Esophagus muscularis mucosa (tissue), 4 donors: ENCODE measurements at regions of chr2 and their contacts with region 1.

Region 1: GRCh38 chr2:10122386-10123280 is at the start of gene RRM2:
- DNase-seq: peak; percentile 97
- H3K4me3 ChIP-seq: peak within 1 kb of the TSS; percentile 57 to 64 (median 58)
- H3K27ac ChIP-seq: no peak within 1 kb of the TSS
- H3K4me1 ChIP-seq: peaks cover 20 to 43% (median 37%) of the 10 kb centered on the region in 4 donors
- H3K27me3 ChIP-seq: peaks cover 0 to 30% (median 14%) of the 10 kb centered on the region in 4 donors
- CTCF ChIP-seq: no peak
- EP300 ChIP-seq: no peak
- POLR2A ChIP-seq: no peak
- total RNA-seq, gene RRM2: 1.7 to 4.6 TPM in 2 of 4 donors, not detected in the others

Region 2: GRCh38 chr2:9993488-9994165 is 129.0 kb before region 1 on chr2:
- intact Hi-C with region 1: no loop called
- DNase-seq: no peak
- H3K4me3 ChIP-seq: no peak overlapping the region
- H3K27ac ChIP-seq: peak overlapping the region in 2 of 4 donors; percentile 17 to 20
- H3K4me1 ChIP-seq: peaks cover 0 to 27% (median 14%) of the 10 kb centered on the region in 4 donors
- H3K27me3 ChIP-seq: no peaks in the 10 kb centered on the region
- CTCF ChIP-seq: peak in 1 of 3 experiments; percentile 11
- EP300 ChIP-seq: no peak
- POLR2A ChIP-seq: no peak

Region 3: GRCh38 chr2:10220902-10221391 is 98.3 kb after region 1 on chr2:
- intact Hi-C with region 1: no loop called
- DNase-seq: no peak
- H3K4me3 ChIP-seq: no peak overlapping the region
- H3K27ac ChIP-seq: no peak overlapping the region
- H3K4me1 ChIP-seq: no peaks in the 10 kb centered on the region
- H3K27me3 ChIP-seq: peaks cover 0 to 30% (median 0%) of the 10 kb centered on the region in 4 donors
- CTCF ChIP-seq: no peak
- EP300 ChIP-seq: no peak
- POLR2A ChIP-seq: no peak

Region 4: GRCh38 chr2:10302479-10303180 is 180.0 kb after region 1 on chr2 and contains the start of gene HPCAL1:
- intact Hi-C with region 1: loop called (anchors 5 kb)
- DNase-seq: no peak
- H3K4me3 ChIP-seq: peak within 1 kb of the TSS; percentile 76 to 98 (median 92)
- H3K27ac ChIP-seq: peak within 1 kb of the TSS; percentile 73 to 87 (median 83)
- H3K4me1 ChIP-seq: peaks cover 33 to 53% (median 48%) of the 10 kb centered on the region in 4 donors
- H3K27me3 ChIP-seq: no peaks in the 10 kb centered on the region
- CTCF ChIP-seq: peak; percentile 50 to 69 (median 57)
- EP300 ChIP-seq: no peak
- POLR2A ChIP-seq: peak; percentile 85
- total RNA-seq, gene HPCAL1: 34.5 to 54.2 (median 41.3) TPM

Region 5: GRCh38 chr2:10408649-10409579 is 286.3 kb after region 1 on chr2:
- intact Hi-C with region 1: loop called (anchors 2 kb)
- DNase-seq: no peak
- H3K4me3 ChIP-seq: peak overlapping the region in 1 of 4 donors; percentile 7
- H3K27ac ChIP-seq: peak overlapping the region in 3 of 4 donors; percentile 70 to 72 (median 72)
- H3K4me1 ChIP-seq: peaks cover 57 to 62% (median 60%) of the 10 kb centered on the region in 4 donors
- H3K27me3 ChIP-seq: no peaks in the 10 kb centered on the region
- CTCF ChIP-seq: peak in 2 of 3 experiments; percentile 91 to 95
- EP300 ChIP-seq: no peak
- POLR2A ChIP-seq: no peak

Region 6: DNA sequence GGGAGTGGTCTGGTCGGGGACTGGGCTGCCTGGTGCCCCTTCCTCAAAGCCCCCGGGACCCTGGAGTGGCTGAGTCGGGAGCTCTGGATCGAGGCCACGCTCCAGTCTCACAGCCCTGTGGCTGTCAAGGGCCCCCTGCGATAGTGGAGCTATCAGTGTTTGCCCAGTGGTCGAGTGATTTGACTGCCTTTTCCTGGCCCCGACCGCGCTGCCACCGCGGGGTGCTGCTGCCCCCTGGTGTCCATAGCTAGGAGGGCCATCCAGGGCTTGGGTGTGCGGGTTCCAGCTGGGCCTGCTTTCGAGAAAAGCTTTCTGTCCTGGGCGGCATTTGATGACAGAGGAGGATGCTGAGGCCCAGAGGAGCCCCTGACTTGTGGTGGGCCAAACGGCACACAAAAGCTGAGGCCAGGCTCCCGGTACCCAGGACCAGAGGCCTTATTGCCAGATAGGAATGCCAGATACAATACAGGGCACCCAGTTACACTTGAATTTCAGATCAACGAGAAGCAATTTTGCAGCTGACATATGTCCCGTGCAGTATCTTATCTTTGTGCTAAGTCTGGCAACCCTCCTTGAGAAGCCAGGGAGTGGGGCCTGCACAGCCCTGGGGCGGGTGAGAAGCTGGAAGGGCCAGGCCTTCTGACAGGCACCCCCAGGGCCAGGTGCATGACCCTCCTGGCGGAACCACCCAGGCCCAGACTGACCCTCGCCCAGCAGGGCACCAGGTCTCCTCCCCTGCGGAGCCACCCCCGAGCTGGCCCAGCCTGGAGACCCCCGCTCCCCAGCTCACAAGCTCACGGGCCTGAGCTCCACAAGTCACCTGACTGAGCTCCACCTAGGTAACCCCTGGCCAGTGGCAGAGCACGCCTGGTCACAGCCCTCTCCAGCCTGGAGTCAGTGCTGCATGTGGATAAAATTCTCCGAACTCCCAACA is 312.5 kb after region 1 on chr2:
- intact Hi-C with region 1: loop called (anchors 2 kb)
- DNase-seq: no peak
- H3K4me3 ChIP-seq: no peak overlapping the region
- H3K27ac ChIP-seq: no peak overlapping the region
- H3K4me1 ChIP-seq: peaks cover 12 to 33% (median 28%) of the 10 kb centered on the region in 4 donors
- H3K27me3 ChIP-seq: peaks cover 0 to 30% (median 4%) of the 10 kb centered on the region in 4 donors
- CTCF ChIP-seq: peak in 2 of 3 experiments; percentile 94
- EP300 ChIP-seq: no peak
- POLR2A ChIP-seq: no peak

Region 7: DNA sequence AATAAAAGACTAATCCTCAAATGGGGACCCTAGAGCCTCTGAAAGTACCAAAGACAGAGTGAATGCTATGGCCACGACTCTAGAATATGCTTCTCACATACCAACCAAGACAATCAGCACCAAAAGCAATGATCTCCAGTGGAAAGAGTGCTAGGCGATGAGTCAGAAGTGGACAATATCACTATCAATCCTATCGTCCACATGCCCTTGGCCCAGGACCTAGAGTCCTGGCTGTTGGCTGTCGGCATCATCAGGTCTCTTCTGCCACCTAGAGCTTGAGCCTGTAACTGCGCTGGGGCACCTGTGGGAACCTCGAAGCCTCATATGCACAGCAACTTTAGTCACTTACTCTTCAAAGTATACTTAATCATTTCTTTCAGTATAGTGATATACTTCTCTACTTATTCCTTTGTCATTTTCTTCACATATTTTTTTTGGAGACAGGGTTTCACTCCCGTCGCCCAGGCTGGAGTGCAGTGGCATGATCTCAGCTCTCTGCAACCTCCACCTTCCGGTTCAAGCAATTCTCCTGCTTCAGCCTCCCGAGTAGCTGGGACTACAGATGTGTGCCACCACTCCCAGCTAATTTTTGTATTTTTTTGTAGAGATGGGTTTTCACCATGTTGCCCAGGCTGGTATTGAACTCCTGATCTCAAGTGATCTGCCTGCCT is 537.4 kb after region 1 on chr2:
- intact Hi-C with region 1: loop called (anchors 10 kb)
- DNase-seq: no peak
- H3K4me3 ChIP-seq: no peak overlapping the region
- H3K27ac ChIP-seq: no peak overlapping the region
- H3K4me1 ChIP-seq: peaks cover 0 to 5% (median 0%) of the 10 kb centered on the region in 4 donors
- H3K27me3 ChIP-seq: no peaks in the 10 kb centered on the region
- CTCF ChIP-seq: peak; percentile 35 to 63 (median 38)
- EP300 ChIP-seq: no peak
- POLR2A ChIP-seq: no peak